ENCODE measurements at regions of chr5 and their contacts with region 1.

Region 1: DNA sequence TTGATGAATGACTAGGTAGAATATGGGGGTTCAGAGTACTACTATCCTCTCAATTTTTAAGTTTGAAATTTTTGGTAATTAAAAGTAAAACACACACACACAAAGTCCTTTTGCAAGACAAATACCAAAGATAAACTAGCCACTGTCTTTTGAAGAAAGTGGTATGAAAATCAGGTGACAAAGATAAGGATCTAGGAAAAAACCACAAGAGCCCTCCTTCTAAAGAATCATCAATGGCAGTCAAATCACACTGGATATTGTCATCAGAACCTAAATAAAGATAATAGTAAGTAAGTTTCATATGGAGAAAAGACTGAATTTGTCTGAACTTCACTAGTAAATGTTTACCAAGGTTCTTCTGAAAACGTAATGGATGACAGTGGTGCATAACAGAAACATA is 30.5 kb upstream of the HK3 start:
- DNase-seq: no peak
- H3K4me3 ChIP-seq: no peak overlapping the region
- H3K4me3 Mint-ChIP-seq: no peak overlapping the region
- H3K27ac ChIP-seq: no peak overlapping the region
- H3K27ac Mint-ChIP-seq: peak overlapping the region in 2 of 7 donors; percentile 12 to 15
- H3K4me1 ChIP-seq: no peaks in the 10 kb centered on the region
- H3K4me1 Mint-ChIP-seq: no peaks in the 10 kb centered on the region
- H3K27me3 ChIP-seq: no peaks in the 10 kb centered on the region
- H3K27me3 Mint-ChIP-seq: no peaks in the 10 kb centered on the region
- CTCF ChIP-seq: no peak

Region 2: GRCh38 chr5:176889321-176890280 is 40.1 kb before region 1 on chr5:
- intact Hi-C with region 1: loop called in 1 of 2 experiments (anchors 5 kb)
- DNase-seq: no peak
- H3K4me3 ChIP-seq: no peak overlapping the region
- H3K4me3 Mint-ChIP-seq: no peak overlapping the region
- H3K27ac ChIP-seq: peak overlapping the region in 1 of 2 donors; percentile 6
- H3K27ac Mint-ChIP-seq: peak overlapping the region in 3 of 7 donors; percentile 45 to 78 (median 70)
- H3K4me1 ChIP-seq: peaks cover 29 to 52% of the 10 kb centered on the region in 2 donors
- H3K4me1 Mint-ChIP-seq: peaks cover 60% of the 10 kb centered on the region
- H3K27me3 ChIP-seq: no peaks in the 10 kb centered on the region
- H3K27me3 Mint-ChIP-seq: peaks cover 0 to 3% (median 1%) of the 10 kb centered on the region in 3 donors
- CTCF ChIP-seq: no peak

Measured in CD14-positive monocyte (primary cell).